AG04449 (cell line): ENCODE measurements at regions of chr2 and their contacts with region 1.

Region 1: GRCh38 chr2:68031542-68032160 is 31.2 kb downstream of the C1D start:
- DNase-seq: no peak
- H3K4me3 ChIP-seq: no peak overlapping the region
- CTCF ChIP-seq: peak; percentile 42

Region 2: DNA sequence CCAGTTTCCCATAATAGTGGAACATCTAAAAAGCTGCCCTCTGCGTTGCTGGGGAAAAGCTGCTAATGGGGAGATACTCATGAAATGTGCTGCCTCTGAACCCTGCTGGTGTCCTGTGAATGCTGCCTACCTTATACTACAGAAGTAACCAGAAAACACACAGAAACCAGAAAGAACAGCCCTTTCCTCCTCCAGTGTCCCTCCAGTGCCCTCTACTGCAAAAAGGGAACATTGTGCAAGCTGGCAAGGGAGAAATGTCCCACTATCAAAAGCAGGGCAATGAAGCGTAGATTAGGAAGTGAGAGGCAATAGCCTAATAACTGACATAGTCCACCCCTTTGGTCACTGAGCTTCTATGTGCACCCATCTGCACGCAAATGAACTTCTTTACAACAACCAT is 797.2 kb before region 1 on chr2:
- CTCF ChIA-PET with region 1: interaction called, 10 read pairs
- POLR2A ChIA-PET with region 1: no interaction called
- DNase-seq: no peak
- H3K4me3 ChIP-seq: no peak overlapping the region
- CTCF ChIP-seq: peak; percentile 76

Region 3: GRCh38 chr2:67600946-67601345 is 430.7 kb before region 1 on chr2:
- CTCF ChIA-PET with region 1: no interaction called
- POLR2A ChIA-PET with region 1: no interaction called
- DNase-seq: no peak
- H3K4me3 ChIP-seq: no peak overlapping the region
- CTCF ChIP-seq: no peak

Region 4: DNA sequence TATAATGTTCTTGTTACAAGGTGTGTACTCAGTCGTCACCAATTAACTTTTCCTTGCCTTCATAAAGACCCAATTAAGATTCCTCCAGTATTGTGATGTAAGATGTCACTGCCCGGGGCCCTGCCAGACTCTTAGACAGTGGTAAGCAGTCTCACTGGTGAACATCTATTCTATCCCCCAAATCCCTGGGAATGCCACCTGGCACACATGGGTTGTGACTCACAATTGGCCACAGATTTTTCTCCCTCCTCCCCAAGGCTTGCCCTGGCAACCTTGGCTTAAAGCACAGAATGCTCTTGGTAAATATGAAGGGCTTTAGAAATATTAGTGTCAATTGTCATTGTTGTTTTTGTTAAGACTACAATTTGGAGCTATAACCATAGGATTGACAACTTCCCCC is 346.7 kb before region 1 on chr2:
- CTCF ChIA-PET with region 1: no interaction called
- POLR2A ChIA-PET with region 1: no interaction called
- DNase-seq: no peak
- H3K4me3 ChIP-seq: no peak overlapping the region
- CTCF ChIP-seq: no peak

Region 5: DNA sequence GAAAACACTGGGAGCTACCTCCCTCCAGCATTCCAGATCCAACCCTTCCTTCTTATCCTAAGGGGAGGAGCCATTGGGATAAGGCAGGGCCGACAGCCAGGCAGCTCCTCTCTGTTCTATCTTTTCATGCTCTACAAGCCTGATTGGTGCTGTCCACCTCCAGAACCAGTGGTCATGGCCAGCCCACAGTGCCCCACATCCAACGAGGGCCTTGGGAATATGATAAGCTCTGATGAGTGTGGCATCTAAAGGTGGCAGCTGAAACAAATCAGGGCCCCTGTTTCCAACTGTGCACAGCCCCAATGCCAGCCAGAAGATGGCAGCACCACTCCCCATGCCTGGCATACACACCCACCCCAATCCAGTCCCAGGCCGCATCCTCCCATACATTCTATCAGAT is 298.1 kb before region 1 on chr2:
- CTCF ChIA-PET with region 1: interaction called, 27 read pairs
- POLR2A ChIA-PET with region 1: interaction called, 5 read pairs
- DNase-seq: no peak
- H3K4me3 ChIP-seq: no peak overlapping the region
- CTCF ChIP-seq: peak; percentile 72

Region 6: GRCh38 chr2:67846370-67847070 is 185.1 kb before region 1 on chr2:
- CTCF ChIA-PET with region 1: interaction called, 44 read pairs
- POLR2A ChIA-PET with region 1: no interaction called
- DNase-seq: peak; percentile 84
- H3K4me3 ChIP-seq: peak overlapping the region; percentile 30; the same call in 1 of the 2 replicates
- CTCF ChIP-seq: peak; percentile 58

Region 7: DNA sequence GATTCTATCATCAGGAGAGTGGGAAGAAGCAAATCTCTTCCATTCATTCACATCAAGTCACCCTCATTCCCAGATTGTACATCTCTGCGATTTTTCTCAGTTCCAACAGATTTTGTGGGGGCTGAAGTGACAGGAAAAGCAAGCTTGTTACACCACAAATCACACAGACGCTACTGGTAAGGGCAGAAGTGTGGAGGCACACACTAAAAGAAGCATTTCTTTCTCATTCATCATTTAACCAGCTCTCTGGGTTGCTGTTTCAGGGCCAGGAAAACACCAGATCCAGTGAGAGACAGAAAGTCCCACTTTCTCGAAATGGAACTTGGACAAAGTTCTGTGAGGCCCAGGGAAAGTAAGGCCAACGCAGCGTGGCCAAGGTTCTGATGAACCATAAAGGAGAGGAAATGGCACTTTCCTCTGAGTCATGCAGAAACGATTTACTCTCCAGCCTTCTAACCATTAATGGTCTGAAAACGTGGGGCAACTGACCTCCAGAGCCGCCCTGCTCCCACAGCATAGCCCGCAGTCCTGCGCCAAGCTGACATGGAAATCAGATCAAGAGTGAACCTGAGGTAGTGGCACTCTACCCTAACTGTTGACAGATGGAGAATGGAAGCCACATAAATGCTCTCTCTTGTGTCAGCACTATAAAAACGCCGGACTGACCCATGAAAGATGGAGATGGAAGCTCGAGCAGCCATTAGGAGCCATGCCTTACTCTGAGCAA is 159.8 kb before region 1 on chr2:
- CTCF ChIA-PET with region 1: interaction called, 10 read pairs
- POLR2A ChIA-PET with region 1: no interaction called
- DNase-seq: peak; percentile 55
- H3K4me3 ChIP-seq: no peak overlapping the region
- CTCF ChIP-seq: no peak